K562 (cell line): ENCODE measurements at regions of chr14 and their contacts with region 1.

Region 1: GRCh38 chr14:37594238-37594914 is 673 bp downstream of the FOXA1 start:
- DNase-seq: peak; percentile 42 to 89 (median 60)
- ATAC-seq: peak; percentile 73
- H3K4me3 ChIP-seq: peak overlapping the region; percentile 56
- H3K27ac ChIP-seq: peak overlapping the region; percentile 62; the same call in 2 of the 3 replicates
- H3K4me1 ChIP-seq: peaks cover 3 to 21% of the 10 kb centered on the region in 2 experiments; a peak in 4 of 5 replicates
- H3K27me3 ChIP-seq: no peaks in the 10 kb centered on the region
- CTCF ChIP-seq: peak; percentile 66 to 85 (median 75)
- EP300 ChIP-seq: no peak
- POLR2A ChIP-seq: no peak
- RAD21 ChIP-seq: peak; percentile 49 to 56

Region 2: GRCh38 chr14:37246427-37246914 is 347.9 kb before region 1 on chr14:
- CTCF ChIA-PET with region 1: interaction called, 4 read pairs
- POLR2A ChIA-PET with region 1: no interaction called
- in situ Hi-C with region 1: loop called (anchors 25 kb)
- intact Hi-C with region 1: loop called (anchors 2 kb)
- DNase-seq: peak; percentile 16 to 54 (median 24)
- ATAC-seq: 0 out of 3 replicates have a peak, but pooled peaks have one; percentile 39
- H3K4me3 ChIP-seq: no peak overlapping the region
- H3K27ac ChIP-seq: no peak overlapping the region
- H3K4me1 ChIP-seq: no peaks in the 10 kb centered on the region
- H3K27me3 ChIP-seq: no peaks in the 10 kb centered on the region
- CTCF ChIP-seq: peak in 2 of 3 experiments; percentile 53 to 71; a peak in 4 of 6 replicates
- EP300 ChIP-seq: no peak
- POLR2A ChIP-seq: no peak
- RAD21 ChIP-seq: peak; percentile 67 to 73

Region 3: DNA sequence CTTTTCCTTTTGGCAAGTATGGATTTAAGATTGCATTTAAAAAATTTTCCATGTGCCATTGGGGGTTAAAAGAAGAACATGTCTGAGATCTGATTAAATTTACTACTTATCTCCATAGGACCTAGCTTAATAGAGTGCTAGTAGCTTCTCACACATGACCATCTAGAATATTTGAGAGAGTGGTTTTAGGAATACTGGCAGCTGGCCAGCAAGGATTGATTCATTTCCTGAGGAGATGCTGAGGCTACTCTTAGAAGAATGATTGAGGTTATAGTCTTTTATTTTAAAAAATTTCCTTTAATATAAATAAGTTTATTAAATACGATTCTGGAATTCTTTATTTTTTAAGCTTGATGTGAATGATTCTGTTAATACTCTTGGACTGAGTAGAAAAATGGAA is 340.5 kb before region 1 on chr14:
- CTCF ChIA-PET with region 1: no interaction called
- POLR2A ChIA-PET with region 1: no interaction called
- in situ Hi-C with region 1: loop called (anchors 25 kb)
- intact Hi-C with region 1: no loop called
- DNase-seq: no peak
- ATAC-seq: no peak
- H3K4me3 ChIP-seq: no peak overlapping the region
- H3K27ac ChIP-seq: no peak overlapping the region
- H3K4me1 ChIP-seq: no peaks in the 10 kb centered on the region
- H3K27me3 ChIP-seq: no peaks in the 10 kb centered on the region
- CTCF ChIP-seq: no peak
- EP300 ChIP-seq: no peak
- POLR2A ChIP-seq: no peak
- RAD21 ChIP-seq: no peak

Region 4: DNA sequence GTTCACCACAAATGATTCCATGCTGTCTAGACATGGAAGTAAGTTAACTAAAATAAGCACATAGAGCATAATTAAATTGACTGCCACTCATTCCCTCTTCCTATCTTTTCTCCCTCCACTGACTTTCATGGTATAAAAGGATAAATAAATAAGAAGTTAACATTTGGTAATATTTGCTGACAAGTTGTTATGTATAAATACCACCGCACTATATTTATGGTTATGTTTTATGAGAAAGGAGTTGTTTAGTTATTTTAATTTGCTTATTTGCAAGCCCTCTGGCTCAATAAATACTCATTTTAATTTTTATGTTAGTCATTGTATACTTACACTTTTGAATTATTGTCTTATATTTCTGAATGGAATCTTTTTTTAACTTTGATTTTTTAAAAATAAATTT is 283.1 kb before region 1 on chr14:
- CTCF ChIA-PET with region 1: no interaction called
- POLR2A ChIA-PET with region 1: no interaction called
- in situ Hi-C with region 1: no loop called
- intact Hi-C with region 1: no loop called
- DNase-seq: no peak
- ATAC-seq: no peak
- H3K4me3 ChIP-seq: no peak overlapping the region
- H3K27ac ChIP-seq: no peak overlapping the region
- H3K4me1 ChIP-seq: no peaks in the 10 kb centered on the region
- H3K27me3 ChIP-seq: no peaks in the 10 kb centered on the region
- CTCF ChIP-seq: no peak
- EP300 ChIP-seq: no peak
- POLR2A ChIP-seq: no peak
- RAD21 ChIP-seq: no peak

Region 5: DNA sequence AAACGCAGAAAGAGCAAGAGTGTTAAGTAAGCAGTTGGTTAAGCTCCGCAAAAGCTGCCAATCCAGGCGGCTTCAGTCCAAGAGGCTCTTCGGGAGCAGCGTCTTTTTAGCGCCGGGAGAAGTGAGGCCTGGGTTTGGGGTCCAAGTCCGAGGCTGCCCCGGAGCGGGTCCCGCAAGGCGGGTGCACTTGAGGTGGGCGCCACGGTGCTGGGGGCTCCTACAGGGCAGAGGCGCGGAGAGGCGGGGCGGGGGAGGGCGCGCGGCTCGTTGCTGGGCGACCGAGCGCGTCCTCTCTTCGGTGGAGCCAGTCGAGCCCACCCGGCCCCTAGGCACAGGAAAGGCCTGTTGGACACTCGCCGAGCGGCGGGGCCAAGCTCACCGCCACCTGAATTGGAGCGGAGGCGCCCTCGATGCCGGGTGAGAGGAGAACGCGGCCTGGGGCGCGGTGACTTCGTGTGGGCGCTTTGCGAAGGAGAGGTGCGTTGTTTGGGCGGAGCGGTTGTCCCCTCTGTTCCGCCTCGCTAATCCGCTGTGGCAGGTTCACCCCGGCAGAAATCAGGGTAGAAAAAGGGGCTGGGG is 16.7 kb after region 1 on chr14:
- CTCF ChIA-PET with region 1: no interaction called
- POLR2A ChIA-PET with region 1: no interaction called
- in situ Hi-C with region 1: no loop called
- intact Hi-C with region 1: no loop called
- DNase-seq: no peak
- ATAC-seq: no peak
- H3K4me3 ChIP-seq: no peak overlapping the region
- H3K27ac ChIP-seq: no peak overlapping the region
- H3K4me1 ChIP-seq: no peaks in the 10 kb centered on the region; a peak in 1 of 5 replicates
- H3K27me3 ChIP-seq: peaks cover 0 to 8% of the 10 kb centered on the region in 2 experiments; a peak in 1 of 5 replicates
- CTCF ChIP-seq: no peak
- EP300 ChIP-seq: no peak
- POLR2A ChIP-seq: no peak
- RAD21 ChIP-seq: no peak